ENCODE measurements at regions of chr11 and their contacts with region 1.

Region 1: DNA sequence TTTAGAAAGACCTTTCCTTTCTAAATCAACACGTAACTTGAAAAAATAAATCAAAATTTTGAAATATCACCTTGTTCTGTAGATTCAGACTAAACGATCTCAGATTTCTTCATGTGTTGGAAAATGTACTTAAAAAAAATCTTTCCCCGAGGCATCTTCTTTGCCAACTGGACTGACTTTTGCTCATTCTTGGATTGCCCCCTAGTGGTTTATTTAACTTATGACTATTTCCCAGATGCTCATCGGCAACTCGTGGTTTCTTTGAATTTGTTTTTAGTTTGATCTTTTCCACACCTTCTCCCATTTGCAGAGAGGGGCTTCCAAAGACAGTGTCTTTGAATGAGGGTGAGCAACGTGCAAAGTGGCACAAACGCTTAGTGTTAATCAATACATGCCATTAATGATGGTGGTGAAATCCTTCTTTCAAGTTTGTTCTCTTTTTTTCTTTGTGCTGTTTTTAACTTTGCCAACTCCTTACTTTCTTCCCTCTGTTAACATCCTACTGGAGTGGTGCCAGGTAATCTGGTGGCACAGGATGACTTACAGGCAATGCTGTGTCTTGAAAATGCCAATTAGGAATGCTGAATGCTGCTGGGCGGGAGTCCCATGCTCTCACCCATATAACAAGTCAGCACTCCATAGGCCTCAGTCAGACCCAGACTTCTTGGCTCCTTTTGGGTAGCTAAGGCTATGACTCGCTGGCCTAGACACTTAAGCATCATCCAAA is 18.3 kb downstream of the PRSS23 start:
- DNase-seq: peak; percentile 73
- H3K4me3 Mint-ChIP-seq: no peak overlapping the region
- H3K27ac Mint-ChIP-seq: peak overlapping the region; percentile 17
- H3K4me1 Mint-ChIP-seq: peaks cover 11% of the 10 kb centered on the region
- H3K27me3 Mint-ChIP-seq: peaks cover 27% of the 10 kb centered on the region

Region 2: GRCh38 chr11:85595285-85595884 is 1223.2 kb before region 1 on chr11:
- intact Hi-C with region 1: loop called (anchors 5 kb)
- DNase-seq: peak; percentile 65
- H3K4me3 Mint-ChIP-seq: no peak overlapping the region
- H3K27ac Mint-ChIP-seq: no peak overlapping the region
- H3K4me1 Mint-ChIP-seq: no peaks in the 10 kb centered on the region
- H3K27me3 Mint-ChIP-seq: peaks cover 15% of the 10 kb centered on the region

Region 3: DNA sequence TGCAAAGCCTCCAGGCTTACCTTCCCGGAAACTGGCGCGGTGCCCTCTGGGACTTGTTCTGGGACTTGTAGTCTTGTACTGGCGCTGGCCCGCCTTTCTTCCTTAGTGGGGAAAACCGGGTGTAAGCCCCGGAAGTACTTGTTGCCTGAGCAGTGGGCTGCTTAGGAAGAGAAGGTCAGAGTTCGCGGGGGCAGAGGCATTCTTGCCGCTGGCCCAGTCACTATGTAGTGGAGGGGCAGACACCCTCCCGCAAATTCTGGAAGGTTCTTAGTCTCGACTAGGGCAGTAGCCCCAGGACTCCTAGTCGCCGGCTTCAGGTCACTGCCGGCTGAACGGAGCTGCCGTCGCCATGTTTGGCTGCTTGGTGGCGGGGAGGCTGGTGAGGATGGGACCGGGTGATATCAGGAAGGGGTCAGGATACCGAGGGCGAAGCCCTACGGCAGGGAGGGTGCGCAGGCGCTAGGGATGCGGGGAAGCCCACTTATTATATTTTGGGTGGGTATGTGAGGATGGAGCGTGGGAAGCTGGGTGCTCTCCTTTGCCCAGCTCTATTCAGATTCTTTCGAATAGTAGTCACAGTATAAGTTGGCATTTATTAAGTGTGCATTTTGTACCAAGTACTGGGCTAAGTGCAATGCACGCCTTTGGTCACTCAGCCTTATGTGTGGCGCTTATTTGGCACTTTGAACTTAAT is 516.4 kb before region 1 on chr11 and contains the start of gene HIKESHI:
- intact Hi-C with region 1: loop called (anchors 5 kb)
- DNase-seq: peak; percentile 96
- H3K4me3 Mint-ChIP-seq: peak within 1 kb of the TSS; percentile 99
- H3K27ac Mint-ChIP-seq: peak within 1 kb of the TSS; percentile 98
- H3K4me1 Mint-ChIP-seq: peaks cover 19% of the 10 kb centered on the region
- H3K27me3 Mint-ChIP-seq: peaks cover 2% of the 10 kb centered on the region
- total RNA-seq, gene HIKESHI: 54.0 and 62.4 TPM in 2 replicates

Region 4: DNA sequence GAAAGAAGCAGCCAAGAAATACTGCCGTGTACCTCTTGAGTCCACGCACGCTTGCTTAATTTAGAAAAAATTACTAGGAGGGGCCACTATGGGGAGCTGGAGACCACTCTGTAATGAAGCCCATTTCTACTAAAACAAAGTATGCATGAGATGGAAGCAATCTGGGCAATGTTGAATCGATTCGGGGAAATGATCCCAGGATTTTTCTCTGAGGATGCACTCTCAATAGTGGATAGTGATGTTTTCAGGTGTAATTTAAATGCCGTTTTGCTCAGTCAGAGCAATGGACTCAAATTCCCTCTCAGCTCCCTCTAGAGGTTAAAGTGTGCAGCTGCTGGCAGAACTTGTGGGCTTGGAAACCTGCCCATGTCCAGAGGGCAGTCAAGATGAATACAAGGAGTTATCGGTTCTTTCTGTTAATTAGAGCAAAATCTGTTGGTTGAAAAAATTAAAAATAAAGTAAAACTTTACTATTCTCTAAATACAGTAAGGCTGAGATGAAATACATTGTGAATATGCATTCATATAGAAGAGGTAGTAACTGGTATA is 210.3 kb before region 1 on chr11:
- intact Hi-C with region 1: loop called (anchors 1 kb)
- DNase-seq: peak; percentile 82
- H3K4me3 Mint-ChIP-seq: no peak overlapping the region
- H3K27ac Mint-ChIP-seq: no peak overlapping the region
- H3K4me1 Mint-ChIP-seq: peaks cover 22% of the 10 kb centered on the region
- H3K27me3 Mint-ChIP-seq: peaks cover 3% of the 10 kb centered on the region

Region 5: GRCh38 chr11:86781546-86781945 is 37.1 kb before region 1 on chr11:
- intact Hi-C with region 1: no loop called
- DNase-seq: no peak
- H3K4me3 Mint-ChIP-seq: no peak overlapping the region
- H3K27ac Mint-ChIP-seq: no peak overlapping the region
- H3K4me1 Mint-ChIP-seq: no peaks in the 10 kb centered on the region
- H3K27me3 Mint-ChIP-seq: peaks cover 30% of the 10 kb centered on the region